Aorta (tissue), 5 donors: ENCODE measurements at regions of chr19 and their contacts with region 1.

Region 1: GRCh38 chr19:13880059-13881043 is 3.4 kb downstream of the NANOS3 start:
- DNase-seq: peak; percentile 99 to 100
- ATAC-seq: peak; percentile 97
- H3K4me3 ChIP-seq: no peak overlapping the region
- H3K27ac ChIP-seq: peak overlapping the region in 1 of 2 donors; percentile 4
- H3K4me1 ChIP-seq: no peaks in the 10 kb centered on the region
- H3K27me3 ChIP-seq: no peaks in the 10 kb centered on the region

Region 2: GRCh38 chr19:13905938-13906904 is 25.9 kb after region 1 on chr19 and contains the starts of genes BRME1 and CC2D1A:
- intact Hi-C with region 1: loop called in 1 of 2 experiments (anchors 1 kb)
- DNase-seq: peak; percentile 95 to 98
- ATAC-seq: peak; percentile 96
- H3K4me3 ChIP-seq: peak within 1 kb of the TSS; percentile 72 to 76
- H3K27ac ChIP-seq: no peak within 1 kb of the TSS
- H3K4me1 ChIP-seq: no peaks in the 10 kb centered on the region
- H3K27me3 ChIP-seq: no peaks in the 10 kb centered on the region
- total RNA-seq, gene BRME1: 2.0 to 2.3 TPM
- total RNA-seq, gene CC2D1A: 26.9 to 37.2 TPM

Region 3: GRCh38 chr19:13952154-13953035 is 72.0 kb after region 1 on chr19 and contains the start of gene DCAF15:
- intact Hi-C with region 1: loop called in 1 of 2 experiments (anchors 1 kb)
- DNase-seq: peak; percentile 99 to 100
- ATAC-seq: peak; percentile 99
- H3K4me3 ChIP-seq: peak within 1 kb of the TSS; percentile 88 to 92
- H3K27ac ChIP-seq: peak within 1 kb of the TSS in 1 of 2 donors; percentile 49
- H3K4me1 ChIP-seq: no peaks in the 10 kb centered on the region
- H3K27me3 ChIP-seq: no peaks in the 10 kb centered on the region
- total RNA-seq, gene DCAF15: 21.8 to 25.3 TPM

Region 4: GRCh38 chr19:14059093-14059480 is 178.7 kb after region 1 on chr19:
- intact Hi-C with region 1: loop called in 1 of 2 experiments (anchors 5 kb)
- DNase-seq: no peak
- ATAC-seq: no peak
- H3K4me3 ChIP-seq: no peak overlapping the region
- H3K27ac ChIP-seq: no peak overlapping the region
- H3K4me1 ChIP-seq: no peaks in the 10 kb centered on the region
- H3K27me3 ChIP-seq: no peaks in the 10 kb centered on the region

Region 5: DNA sequence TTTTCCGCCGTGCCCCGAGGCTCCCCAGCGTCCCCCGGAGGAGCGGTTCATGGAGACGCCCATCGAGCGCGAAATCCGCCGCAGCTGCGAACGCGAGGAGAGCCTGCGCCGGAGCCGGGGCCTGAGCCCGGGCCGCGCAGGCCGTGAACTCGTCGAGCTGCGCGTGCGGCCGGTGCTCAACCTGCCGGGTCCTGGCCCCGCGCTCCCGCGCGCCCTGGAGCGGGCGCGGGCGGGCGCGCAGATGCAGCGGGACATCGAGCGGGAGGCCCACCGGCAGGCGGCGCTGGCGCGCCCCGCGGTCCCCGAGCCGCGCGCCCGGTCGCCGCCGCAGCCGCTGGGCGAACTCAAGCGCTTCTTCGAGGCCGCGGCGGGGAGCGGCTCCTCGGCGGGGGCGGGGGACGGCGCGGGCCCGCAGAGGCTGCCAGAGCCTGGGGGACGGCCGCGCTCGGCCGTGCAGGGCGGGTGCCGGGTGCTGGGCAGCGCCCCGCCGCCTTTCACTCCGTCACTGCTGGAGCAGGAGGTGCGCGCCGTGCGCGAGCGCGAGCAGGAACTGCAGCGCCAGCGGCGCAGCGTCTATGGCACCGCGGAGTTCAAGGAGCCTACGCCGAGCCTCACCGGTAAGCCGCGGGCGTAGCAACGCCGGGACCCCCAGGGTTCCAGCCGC is 193.0 kb after region 1 on chr19:
- intact Hi-C with region 1: loop called (anchors 1 to 2 kb)
- DNase-seq: peak; percentile 85 to 92
- ATAC-seq: peak; percentile 65
- H3K4me3 ChIP-seq: peak overlapping the region; percentile 52 to 67
- H3K27ac ChIP-seq: peak overlapping the region; percentile 30 to 69
- H3K4me1 ChIP-seq: no peaks in the 10 kb centered on the region
- H3K27me3 ChIP-seq: no peaks in the 10 kb centered on the region

Region 6: GRCh38 chr19:14347999-14348889 is 467.9 kb after region 1 on chr19:
- intact Hi-C with region 1: loop called in 1 of 2 experiments (anchors 5 kb)
- DNase-seq: peak; percentile 79 to 90
- ATAC-seq: peak; percentile 90
- H3K4me3 ChIP-seq: no peak overlapping the region
- H3K27ac ChIP-seq: no peak overlapping the region
- H3K4me1 ChIP-seq: no peaks in the 10 kb centered on the region
- H3K27me3 ChIP-seq: no peaks in the 10 kb centered on the region